GM13976 (cell line): ENCODE measurements at regions of chr11 and their contacts with region 1.

Region 1: DNA sequence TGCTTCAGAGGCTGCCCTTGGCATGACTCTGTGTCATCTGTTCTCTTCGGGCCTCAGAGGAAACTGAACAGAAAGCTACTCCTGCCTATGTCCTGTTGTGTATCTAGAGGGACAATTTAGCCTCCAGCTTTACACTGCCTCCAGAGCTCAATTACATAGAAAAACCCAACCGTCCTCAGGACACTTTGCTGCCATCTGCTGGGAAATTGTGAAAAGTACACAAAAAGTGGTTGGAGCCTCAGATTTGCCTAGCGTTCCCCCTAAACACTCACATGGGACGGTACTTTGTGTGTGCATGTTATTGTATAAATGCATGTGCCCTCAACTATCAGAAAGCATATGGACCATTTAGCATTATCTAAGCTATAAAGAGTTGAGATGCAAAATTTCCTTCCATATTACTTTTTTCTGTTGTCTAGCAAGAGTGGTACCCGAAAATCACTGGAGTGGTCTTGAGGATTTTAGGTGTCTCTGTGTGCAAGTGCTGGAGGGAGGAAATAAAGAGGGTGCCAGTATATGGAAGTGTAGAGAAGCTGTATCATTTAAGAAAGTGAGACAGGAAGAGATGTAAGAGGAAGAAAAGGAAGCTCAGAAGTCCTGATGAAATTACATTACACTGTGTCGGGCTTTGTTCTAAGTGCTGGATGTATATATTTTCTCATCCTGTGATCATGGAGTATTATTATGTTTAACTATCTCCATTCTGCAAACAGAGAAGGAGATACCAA is 8.7 kb upstream of the MS4A4E start:
- DNase-seq: peak; percentile 15
- CTCF ChIP-seq: no peak

Region 2: DNA sequence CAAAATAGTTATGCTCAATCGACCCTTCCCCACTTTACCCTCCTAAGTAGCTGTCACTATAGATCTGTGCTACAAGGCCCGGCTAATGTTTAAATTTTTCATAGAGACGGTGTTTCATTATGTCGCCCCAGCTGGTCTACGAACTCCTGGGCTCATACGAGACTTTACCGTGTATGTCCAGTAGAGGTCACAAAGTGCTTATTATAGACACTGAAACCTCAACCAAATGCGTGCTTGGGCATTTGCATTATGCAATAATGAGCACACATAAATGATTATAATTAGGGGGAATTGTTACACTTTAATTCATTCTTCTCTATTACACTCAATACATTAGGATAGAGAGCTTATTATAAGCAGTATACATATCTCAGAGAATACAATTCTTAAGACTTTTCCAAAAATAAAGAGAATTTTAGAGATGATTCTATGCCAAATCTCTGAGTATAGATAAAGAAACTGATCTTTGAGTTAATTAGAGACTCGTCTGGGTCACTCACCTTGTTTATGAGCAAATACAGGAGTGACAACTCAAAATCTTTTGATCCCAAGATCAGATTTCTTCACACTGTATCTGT is 428.6 kb before region 1 on chr11:
- in situ Hi-C with region 1: loop called (anchors 10 kb)
- DNase-seq: peak; percentile 64
- CTCF ChIP-seq: peak; percentile 51

Region 3: GRCh38 chr11:60193687-60194433 is 57.8 kb before region 1 on chr11:
- in situ Hi-C with region 1: no loop called
- DNase-seq: peak; percentile 38
- CTCF ChIP-seq: peak; percentile 70

Region 4: GRCh38 chr11:61007591-61008478 is 756.2 kb after region 1 on chr11:
- in situ Hi-C with region 1: no loop called
- DNase-seq: peak; percentile 64
- CTCF ChIP-seq: no peak